ENCODE measurements at regions of chr15 and their contacts with region 1.

Region 1: GRCh38 chr15:94582369-94582768 is 351.0 kb downstream of the MCTP2 start:
- DNase-seq: peak in 1 of 9 donors; percentile 46
- ATAC-seq: no peak
- H3K4me3 ChIP-seq: no peak overlapping the region
- H3K4me3 Mint-ChIP-seq: no peak overlapping the region
- H3K27ac ChIP-seq: no peak overlapping the region
- H3K27ac Mint-ChIP-seq: no peak overlapping the region
- H3K4me1 ChIP-seq: peaks cover 13 to 29% of the 10 kb centered on the region in 2 donors
- H3K4me1 Mint-ChIP-seq: peaks cover 17 to 58% (median 45%) of the 10 kb centered on the region in 7 donors
- H3K27me3 ChIP-seq: no peaks in the 10 kb centered on the region
- H3K27me3 Mint-ChIP-seq: peaks cover 53 to 85% (median 79%) of the 10 kb centered on the region in 5 donors

Region 2: DNA sequence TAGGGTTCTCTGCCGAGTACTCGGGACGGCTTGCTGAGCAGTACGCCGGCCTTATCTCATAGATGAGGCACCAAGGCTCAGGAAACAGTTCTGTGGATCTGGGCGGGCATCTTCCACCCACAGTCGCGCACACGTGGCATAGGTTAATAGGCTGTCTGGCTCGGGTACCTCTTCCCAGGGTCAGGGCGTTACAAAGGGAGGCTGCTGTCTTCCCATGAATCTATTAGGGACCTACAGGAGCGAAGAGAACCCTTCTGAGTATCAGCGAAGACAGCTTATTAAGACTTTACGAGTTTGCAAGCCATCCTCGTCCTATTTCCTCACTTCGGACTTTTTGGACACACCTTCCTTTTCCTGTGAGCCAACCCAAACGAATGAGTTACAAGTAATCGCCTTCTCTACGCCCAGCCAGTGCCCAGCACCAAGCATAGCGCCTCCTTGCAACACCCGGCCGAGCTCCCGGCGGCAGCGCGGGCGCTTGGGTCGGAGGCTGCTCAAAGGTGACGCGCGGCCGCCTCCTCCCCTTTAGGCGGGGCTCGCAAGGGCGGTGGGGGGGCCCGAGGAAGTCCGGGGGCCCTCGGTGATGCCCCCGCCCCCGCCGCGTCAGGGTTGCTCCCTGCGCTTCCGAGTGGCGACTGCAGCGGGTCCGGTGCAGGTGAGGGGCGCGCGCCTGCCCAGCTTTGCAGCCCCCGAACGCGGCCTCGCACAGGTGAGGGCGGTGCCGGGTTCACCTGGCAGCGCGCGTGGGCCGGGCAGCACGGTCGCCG is 351.2 kb before region 1 on chr15 and contains the start of gene MCTP2:
- CTCF ChIA-PET with region 1: no interaction called
- POLR2A ChIA-PET with region 1: no interaction called
- intact Hi-C with region 1: loop called in 1 of 2 experiments (anchors 10 kb)
- DNase-seq: peak; percentile 64 to 88 (median 73)
- ATAC-seq: peak; percentile 91
- H3K4me3 ChIP-seq: peak within 1 kb of the TSS; percentile 73
- H3K4me3 Mint-ChIP-seq: peak within 1 kb of the TSS; percentile 88 to 97 (median 96)
- H3K27ac ChIP-seq: peak within 1 kb of the TSS; percentile 72
- H3K27ac Mint-ChIP-seq: peak within 1 kb of the TSS; percentile 69 to 94 (median 90)
- H3K4me1 ChIP-seq: peaks cover 11 to 33% of the 10 kb centered on the region in 2 donors
- H3K4me1 Mint-ChIP-seq: peaks cover 33 to 79% (median 52%) of the 10 kb centered on the region in 7 donors
- H3K27me3 ChIP-seq: no peaks in the 10 kb centered on the region
- H3K27me3 Mint-ChIP-seq: peaks cover 0 to 2% (median 0%) of the 10 kb centered on the region in 5 donors
- total RNA-seq, gene MCTP2: 13.8 to 44.5 (median 17.8) TPM

Region 3: DNA sequence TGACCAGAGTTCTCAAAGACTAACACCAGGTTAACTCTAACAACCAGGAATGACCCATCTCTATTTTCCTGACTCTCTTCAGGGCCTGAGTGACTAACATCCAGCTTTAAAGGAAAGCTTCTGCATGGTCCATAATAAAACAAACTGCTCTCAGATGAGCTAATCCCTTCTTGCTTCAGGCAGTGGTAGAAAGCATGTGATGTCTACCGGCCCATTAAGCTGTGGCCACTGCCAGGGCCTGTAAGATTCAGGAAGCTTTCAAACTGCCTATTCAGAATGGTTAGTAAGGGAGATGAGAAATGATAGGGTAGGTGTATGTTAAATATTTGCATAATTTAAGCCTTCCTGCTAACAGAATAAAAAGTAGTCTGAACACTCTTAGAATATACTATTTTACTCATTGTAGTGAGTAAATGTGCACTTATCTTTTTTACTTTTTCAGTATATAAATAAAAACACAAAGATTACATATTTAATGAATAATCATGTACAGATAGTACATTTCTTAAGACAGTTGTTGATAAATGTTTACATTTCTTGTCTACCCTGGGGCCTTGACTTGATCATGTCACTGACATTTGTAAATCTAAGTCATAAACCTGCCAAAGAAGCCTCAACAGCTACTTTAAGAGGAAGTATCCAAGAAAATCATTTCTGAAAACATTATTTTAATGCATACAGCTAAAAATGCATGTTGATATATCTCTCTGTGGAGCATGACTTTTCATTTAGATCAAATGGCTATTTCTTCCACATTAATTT is 129.0 kb before region 1 on chr15:
- CTCF ChIA-PET with region 1: no interaction called
- POLR2A ChIA-PET with region 1: no interaction called
- intact Hi-C with region 1: no loop called
- DNase-seq: no peak
- ATAC-seq: no peak
- H3K4me3 ChIP-seq: no peak overlapping the region
- H3K4me3 Mint-ChIP-seq: no peak overlapping the region
- H3K27ac ChIP-seq: no peak overlapping the region
- H3K27ac Mint-ChIP-seq: no peak overlapping the region
- H3K4me1 ChIP-seq: no peaks in the 10 kb centered on the region
- H3K4me1 Mint-ChIP-seq: no peaks in the 10 kb centered on the region
- H3K27me3 ChIP-seq: no peaks in the 10 kb centered on the region
- H3K27me3 Mint-ChIP-seq: no peaks in the 10 kb centered on the region

Region 4: GRCh38 chr15:94563455-94563854 is 18.9 kb before region 1 on chr15:
- CTCF ChIA-PET with region 1: no interaction called
- POLR2A ChIA-PET with region 1: no interaction called
- intact Hi-C with region 1: no loop called
- DNase-seq: no peak
- ATAC-seq: no peak
- H3K4me3 ChIP-seq: no peak overlapping the region
- H3K4me3 Mint-ChIP-seq: no peak overlapping the region
- H3K27ac ChIP-seq: no peak overlapping the region
- H3K27ac Mint-ChIP-seq: no peak overlapping the region
- H3K4me1 ChIP-seq: no peaks in the 10 kb centered on the region
- H3K4me1 Mint-ChIP-seq: no peaks in the 10 kb centered on the region
- H3K27me3 ChIP-seq: no peaks in the 10 kb centered on the region
- H3K27me3 Mint-ChIP-seq: peaks cover 15 to 61% (median 44%) of the 10 kb centered on the region in 5 donors

Region 5: DNA sequence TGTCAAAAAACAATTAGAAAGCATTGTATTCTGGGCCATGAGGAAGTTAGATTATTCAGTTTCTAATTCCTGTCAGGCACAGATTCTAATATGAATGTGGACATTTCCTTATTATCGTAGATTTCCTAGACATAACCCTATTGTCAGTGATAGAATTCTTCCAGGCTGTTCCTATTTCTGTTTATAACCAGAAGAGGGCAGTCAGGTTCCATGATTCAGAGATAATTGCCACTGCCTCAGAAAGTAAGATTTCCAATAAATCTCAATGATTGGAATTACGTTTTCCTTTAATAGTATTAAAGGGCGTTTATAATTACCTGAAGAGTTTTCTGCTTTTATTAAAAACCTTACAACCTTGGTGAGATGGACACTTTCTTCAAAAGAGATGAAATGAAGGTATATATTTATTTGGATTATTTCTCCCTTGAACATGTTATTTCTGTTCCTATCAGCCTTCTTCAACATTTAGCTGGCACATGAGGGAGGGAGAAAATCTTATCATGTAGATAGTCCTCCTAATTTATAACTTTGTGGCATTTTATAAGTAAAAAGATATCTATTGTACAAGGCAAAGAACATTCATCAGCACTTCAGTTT is 88.2 kb after region 1 on chr15:
- CTCF ChIA-PET with region 1: no interaction called
- POLR2A ChIA-PET with region 1: no interaction called
- intact Hi-C with region 1: loop called in 1 of 2 experiments (anchors 1 kb)
- DNase-seq: peak in 2 of 9 donors; percentile 3 to 5
- ATAC-seq: no peak
- H3K4me3 ChIP-seq: no peak overlapping the region
- H3K4me3 Mint-ChIP-seq: no peak overlapping the region
- H3K27ac ChIP-seq: no peak overlapping the region
- H3K27ac Mint-ChIP-seq: no peak overlapping the region
- H3K4me1 ChIP-seq: no peaks in the 10 kb centered on the region
- H3K4me1 Mint-ChIP-seq: peaks cover 0 to 3% (median 0%) of the 10 kb centered on the region in 7 donors
- H3K27me3 ChIP-seq: no peaks in the 10 kb centered on the region
- H3K27me3 Mint-ChIP-seq: peaks cover 26 to 63% (median 52%) of the 10 kb centered on the region in 5 donors

Region 6: DNA sequence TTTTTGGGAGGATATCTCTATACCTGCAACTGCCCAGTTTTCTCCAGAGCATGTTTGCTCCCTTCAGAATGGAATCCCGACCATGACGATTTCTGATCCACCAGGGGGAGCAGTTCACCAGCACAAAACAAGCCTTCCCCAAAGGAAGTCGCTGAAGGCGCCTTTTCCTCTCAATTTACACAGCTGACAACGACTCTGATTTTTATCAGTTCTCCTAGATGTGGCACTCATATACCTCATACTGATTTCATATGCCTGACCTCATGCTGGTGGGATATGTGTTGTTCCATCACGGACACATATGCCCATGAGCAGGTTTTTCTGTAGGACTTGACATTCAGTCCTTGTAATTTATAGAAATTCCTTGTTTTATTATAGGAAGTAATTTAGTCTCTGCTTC is 677.1 kb after region 1 on chr15:
- CTCF ChIA-PET with region 1: no interaction called
- POLR2A ChIA-PET with region 1: no interaction called
- intact Hi-C with region 1: loop called in 1 of 2 experiments (anchors 5 kb)
- DNase-seq: peak; percentile 7 to 61 (median 43)
- ATAC-seq: peak; percentile 40
- H3K4me3 ChIP-seq: no peak overlapping the region
- H3K4me3 Mint-ChIP-seq: no peak overlapping the region
- H3K27ac ChIP-seq: no peak overlapping the region
- H3K27ac Mint-ChIP-seq: no peak overlapping the region
- H3K4me1 ChIP-seq: no peaks in the 10 kb centered on the region
- H3K4me1 Mint-ChIP-seq: peaks cover 0 to 13% (median 0%) of the 10 kb centered on the region in 7 donors
- H3K27me3 ChIP-seq: peaks cover 0 to 7% of the 10 kb centered on the region in 2 donors
- H3K27me3 Mint-ChIP-seq: peaks cover 41 to 75% (median 44%) of the 10 kb centered on the region in 5 donors

Region 7: GRCh38 chr15:95446854-95447253 is 864.5 kb after region 1 on chr15:
- CTCF ChIA-PET with region 1: no interaction called
- POLR2A ChIA-PET with region 1: no interaction called
- intact Hi-C with region 1: loop called in 1 of 2 experiments (anchors 2 kb)
- DNase-seq: peak in 7 of 9 donors; percentile 31 to 79 (median 71)
- ATAC-seq: peak; percentile 92
- H3K4me3 ChIP-seq: peak overlapping the region; percentile 8
- H3K4me3 Mint-ChIP-seq: peak overlapping the region; percentile 58 to 84 (median 72)
- H3K27ac ChIP-seq: no peak overlapping the region
- H3K27ac Mint-ChIP-seq: peak overlapping the region in 7 of 9 donors; percentile 2 to 60 (median 53)
- H3K4me1 ChIP-seq: peaks cover 4 to 14% of the 10 kb centered on the region in 2 donors
- H3K4me1 Mint-ChIP-seq: peaks cover 18 to 47% (median 43%) of the 10 kb centered on the region in 7 donors
- H3K27me3 ChIP-seq: no peaks in the 10 kb centered on the region
- H3K27me3 Mint-ChIP-seq: peaks cover 4 to 16% (median 6%) of the 10 kb centered on the region in 5 donors

Region 8: GRCh38 chr15:95520511-95520910 is 938.1 kb after region 1 on chr15:
- CTCF ChIA-PET with region 1: no interaction called
- POLR2A ChIA-PET with region 1: no interaction called
- intact Hi-C with region 1: no loop called
- DNase-seq: no peak
- ATAC-seq: no peak
- H3K4me3 ChIP-seq: no peak overlapping the region
- H3K4me3 Mint-ChIP-seq: no peak overlapping the region
- H3K27ac ChIP-seq: no peak overlapping the region
- H3K27ac Mint-ChIP-seq: no peak overlapping the region
- H3K4me1 ChIP-seq: no peaks in the 10 kb centered on the region
- H3K4me1 Mint-ChIP-seq: no peaks in the 10 kb centered on the region
- H3K27me3 ChIP-seq: no peaks in the 10 kb centered on the region
- H3K27me3 Mint-ChIP-seq: peaks cover 2 to 23% (median 10%) of the 10 kb centered on the region in 5 donors

Region 9: GRCh38 chr15:96064351-96064756 is 1482.0 kb after region 1 on chr15:
- CTCF ChIA-PET with region 1: no interaction called
- POLR2A ChIA-PET with region 1: no interaction called
- intact Hi-C with region 1: loop called in 1 of 2 experiments (anchors 10 kb)
- DNase-seq: no peak
- ATAC-seq: no peak
- H3K4me3 ChIP-seq: no peak overlapping the region
- H3K4me3 Mint-ChIP-seq: no peak overlapping the region
- H3K27ac ChIP-seq: no peak overlapping the region
- H3K27ac Mint-ChIP-seq: no peak overlapping the region
- H3K4me1 ChIP-seq: no peaks in the 10 kb centered on the region
- H3K4me1 Mint-ChIP-seq: no peaks in the 10 kb centered on the region
- H3K27me3 ChIP-seq: no peaks in the 10 kb centered on the region
- H3K27me3 Mint-ChIP-seq: peaks cover 6 to 38% (median 13%) of the 10 kb centered on the region in 5 donors